ENCODE measurements at regions of chr15 and their contacts with region 1.

Region 1: GRCh38 chr15:61195116-61196002 is 33.7 kb downstream of the RORA start:
- DNase-seq: no peak
- ATAC-seq: peak; percentile 71
- H3K4me3 Mint-ChIP-seq: no peak overlapping the region
- H3K27ac Mint-ChIP-seq: no peak overlapping the region
- H3K4me1 Mint-ChIP-seq: peaks cover 42% of the 10 kb centered on the region
- H3K27me3 Mint-ChIP-seq: no peaks in the 10 kb centered on the region
- CTCF ChIP-seq: peak; percentile 82

Region 2: GRCh38 chr15:61169904-61170695 is 25.3 kb before region 1 on chr15:
- CTCF ChIA-PET with region 1: interaction called, 15 read pairs
- POLR2A ChIA-PET with region 1: interaction called, 4 read pairs
- DNase-seq: no peak
- ATAC-seq: peak; percentile 13
- H3K4me3 Mint-ChIP-seq: peak overlapping the region; percentile 8
- H3K27ac Mint-ChIP-seq: peak overlapping the region; percentile 98
- H3K4me1 Mint-ChIP-seq: peaks cover 72% of the 10 kb centered on the region
- H3K27me3 Mint-ChIP-seq: no peaks in the 10 kb centered on the region
- CTCF ChIP-seq: no peak

Region 3: DNA sequence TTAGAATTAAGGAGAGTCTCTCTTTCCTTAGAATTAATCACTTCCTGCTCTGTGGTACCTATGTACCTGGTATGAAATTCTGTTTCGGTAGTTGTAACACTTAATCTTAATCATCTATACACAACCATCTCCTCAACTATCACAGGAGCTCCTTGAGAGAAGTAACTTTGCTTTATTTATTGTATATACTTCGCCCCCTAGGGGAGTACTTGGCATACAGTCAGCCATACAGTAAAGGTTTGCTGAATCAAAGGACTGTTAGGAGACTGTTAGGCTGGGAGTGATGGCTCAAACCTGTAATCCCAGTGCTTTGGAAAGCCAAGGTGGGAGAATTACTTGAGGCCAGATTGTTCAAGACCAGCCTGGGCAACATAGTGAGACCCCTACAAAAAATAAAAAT is 10.9 kb before region 1 on chr15:
- CTCF ChIA-PET with region 1: interaction called, 16 read pairs
- POLR2A ChIA-PET with region 1: interaction called, 3 read pairs
- DNase-seq: no peak
- ATAC-seq: peak; percentile 26; the same call in 1 of the 2 replicates
- H3K4me3 Mint-ChIP-seq: no peak overlapping the region
- H3K27ac Mint-ChIP-seq: no peak overlapping the region
- H3K4me1 Mint-ChIP-seq: peaks cover 36% of the 10 kb centered on the region
- H3K27me3 Mint-ChIP-seq: no peaks in the 10 kb centered on the region; the same call in 1 of the 2 replicates
- CTCF ChIP-seq: no peak

Region 4: DNA sequence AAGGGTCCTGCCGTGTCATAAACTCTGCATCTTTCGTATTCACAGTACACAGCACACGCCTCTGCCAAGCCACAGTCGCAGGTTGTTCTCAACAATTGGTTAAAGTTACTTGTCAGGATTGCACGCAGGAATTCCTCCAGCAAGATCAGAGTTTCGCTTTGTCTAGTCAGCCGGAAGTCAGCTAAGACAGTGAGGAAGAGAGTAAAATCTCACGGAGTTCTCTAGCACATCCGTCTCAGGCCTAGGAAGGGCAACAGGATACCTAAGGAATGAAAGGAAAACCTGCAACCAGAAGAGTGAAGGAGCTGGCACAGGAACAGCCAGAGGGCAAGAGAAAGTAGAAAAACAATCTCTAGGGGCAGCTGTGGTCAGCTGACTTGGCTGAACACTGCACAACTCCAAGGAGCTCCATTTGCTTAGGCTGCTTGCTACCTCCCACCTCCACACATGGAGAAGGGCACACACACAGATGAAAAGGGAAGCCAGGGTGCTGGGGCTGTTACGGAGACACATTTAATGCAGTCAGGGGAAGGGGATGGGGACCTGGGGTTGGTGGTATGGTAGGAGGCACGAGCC is 10.1 kb after region 1 on chr15:
- CTCF ChIA-PET with region 1: interaction called, 11 read pairs
- POLR2A ChIA-PET with region 1: no interaction called
- DNase-seq: no peak
- ATAC-seq: peak; percentile 44
- H3K4me3 Mint-ChIP-seq: no peak overlapping the region
- H3K27ac Mint-ChIP-seq: no peak overlapping the region
- H3K4me1 Mint-ChIP-seq: peaks cover 36% of the 10 kb centered on the region
- H3K27me3 Mint-ChIP-seq: no peaks in the 10 kb centered on the region
- CTCF ChIP-seq: no peak

Region 5: DNA sequence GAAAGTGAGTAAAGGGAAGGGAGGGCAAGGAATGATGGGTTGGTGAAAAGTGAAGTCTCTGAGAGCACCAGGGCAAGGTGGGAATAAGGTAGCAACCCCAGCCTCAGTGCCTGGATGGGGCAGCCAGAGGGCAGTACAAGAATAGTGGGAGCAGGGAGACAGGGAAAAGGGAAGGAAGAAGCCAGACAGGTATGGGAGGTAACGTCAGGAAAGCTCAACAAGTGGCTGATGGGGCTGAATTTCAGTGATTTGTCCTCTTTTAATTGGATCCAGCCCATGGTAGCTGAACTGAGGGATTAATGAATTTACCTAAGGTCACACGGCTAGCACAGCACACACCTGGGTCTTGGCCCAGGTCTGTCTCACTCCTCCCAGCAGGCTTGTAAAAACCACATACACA is 21.2 kb after region 1 on chr15:
- CTCF ChIA-PET with region 1: interaction called, 11 read pairs
- POLR2A ChIA-PET with region 1: no interaction called
- DNase-seq: peak; percentile 53
- ATAC-seq: peak; percentile 99
- H3K4me3 Mint-ChIP-seq: no peak overlapping the region
- H3K27ac Mint-ChIP-seq: peak overlapping the region; percentile 19; the same call in 1 of the 2 replicates
- H3K4me1 Mint-ChIP-seq: peaks cover 30% of the 10 kb centered on the region
- H3K27me3 Mint-ChIP-seq: no peaks in the 10 kb centered on the region
- CTCF ChIP-seq: 0 out of 2 replicates have a peak, but pooled peaks have one; percentile 21

Region 6: GRCh38 chr15:61227269-61227949 is 32.0 kb after region 1 on chr15:
- CTCF ChIA-PET with region 1: interaction called, 12 read pairs
- POLR2A ChIA-PET with region 1: no interaction called
- DNase-seq: peak; percentile 38
- ATAC-seq: no peak; the same call in 1 of the 2 replicates
- H3K4me3 Mint-ChIP-seq: peak overlapping the region; percentile 86
- H3K27ac Mint-ChIP-seq: no peak overlapping the region
- H3K4me1 Mint-ChIP-seq: peaks cover 31% of the 10 kb centered on the region
- H3K27me3 Mint-ChIP-seq: peaks cover 5% of the 10 kb centered on the region
- CTCF ChIP-seq: no peak

Region 7: DNA sequence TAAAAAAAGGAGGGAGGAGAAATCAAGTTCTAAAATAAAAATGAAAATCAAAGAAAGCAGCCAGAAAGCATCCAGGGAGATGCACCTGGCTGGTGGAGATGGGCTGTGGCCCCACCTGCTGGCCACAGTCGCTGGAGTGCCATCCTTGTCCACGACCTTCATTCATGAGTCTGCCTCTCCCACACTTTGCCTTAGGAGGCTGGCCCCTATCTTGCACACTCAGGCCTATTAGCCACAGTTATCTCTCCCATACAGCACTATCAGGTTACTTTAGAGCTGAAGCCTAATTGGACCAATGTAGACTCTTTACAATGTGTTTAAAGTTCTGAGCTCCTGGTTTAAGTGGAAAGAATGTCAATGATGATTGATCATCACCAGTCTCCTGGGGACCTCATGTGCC is 425.8 kb after region 1 on chr15:
- CTCF ChIA-PET with region 1: interaction called, 12 read pairs
- POLR2A ChIA-PET with region 1: no interaction called
- DNase-seq: peak; percentile 57
- ATAC-seq: peak; percentile 95
- H3K4me3 Mint-ChIP-seq: no peak overlapping the region
- H3K27ac Mint-ChIP-seq: no peak overlapping the region
- H3K4me1 Mint-ChIP-seq: peaks cover 10% of the 10 kb centered on the region
- H3K27me3 Mint-ChIP-seq: no peaks in the 10 kb centered on the region
- CTCF ChIP-seq: peak; percentile 65

Measured in WTC11 (cell line).